ENCODE measurements at regions of chr4 and their contacts with region 1.

Region 1: DNA sequence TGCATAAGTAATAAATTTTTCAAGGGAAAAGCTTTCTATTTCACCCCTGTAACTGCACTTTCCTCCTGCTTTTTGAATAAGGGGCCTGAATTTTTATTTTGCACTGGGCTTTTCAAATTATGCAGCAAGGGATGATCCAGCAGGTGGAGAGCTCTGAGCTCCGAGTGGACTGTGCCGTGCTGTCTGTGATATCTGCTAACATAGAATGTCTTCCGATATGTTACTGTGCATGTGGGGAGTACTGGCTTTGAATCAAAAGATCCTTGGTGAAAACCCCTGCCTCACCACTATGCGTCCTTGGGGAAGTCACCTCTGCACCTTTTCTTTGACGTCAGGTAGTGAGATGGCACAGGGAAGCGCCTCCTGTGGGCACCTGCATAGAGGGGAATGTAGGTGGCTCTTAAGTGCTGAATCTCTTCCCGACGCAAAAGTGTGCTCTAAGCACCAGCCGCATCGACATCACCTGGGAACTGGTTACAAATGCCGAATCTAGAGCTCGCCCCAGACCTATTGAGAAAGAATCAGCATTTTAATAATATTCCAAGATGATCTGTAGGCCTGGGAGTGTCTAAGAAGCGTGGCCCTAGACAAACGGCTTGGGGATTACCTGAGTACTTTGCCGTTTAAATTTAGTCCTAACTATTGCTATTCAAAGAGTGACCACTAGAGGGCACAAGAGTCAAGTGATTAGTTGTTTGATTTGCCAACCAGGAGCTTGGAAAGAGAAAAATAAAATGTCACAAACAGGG is 19.2 kb upstream of the WFS1 start:
- DNase-seq: peak in 1 of 2 experiments; percentile 69
- H3K4me3 ChIP-seq: no peak overlapping the region
- H3K4me3 Mint-ChIP-seq: no peak overlapping the region
- H3K27ac Mint-ChIP-seq: no peak overlapping the region
- H3K4me1 ChIP-seq: no peaks in the 10 kb centered on the region
- H3K4me1 Mint-ChIP-seq: no peaks in the 10 kb centered on the region
- H3K27me3 ChIP-seq: no peaks in the 10 kb centered on the region
- H3K27me3 Mint-ChIP-seq: peaks cover 7% of the 10 kb centered on the region
- CTCF ChIP-seq: peak; percentile 55 to 64

Region 2: DNA sequence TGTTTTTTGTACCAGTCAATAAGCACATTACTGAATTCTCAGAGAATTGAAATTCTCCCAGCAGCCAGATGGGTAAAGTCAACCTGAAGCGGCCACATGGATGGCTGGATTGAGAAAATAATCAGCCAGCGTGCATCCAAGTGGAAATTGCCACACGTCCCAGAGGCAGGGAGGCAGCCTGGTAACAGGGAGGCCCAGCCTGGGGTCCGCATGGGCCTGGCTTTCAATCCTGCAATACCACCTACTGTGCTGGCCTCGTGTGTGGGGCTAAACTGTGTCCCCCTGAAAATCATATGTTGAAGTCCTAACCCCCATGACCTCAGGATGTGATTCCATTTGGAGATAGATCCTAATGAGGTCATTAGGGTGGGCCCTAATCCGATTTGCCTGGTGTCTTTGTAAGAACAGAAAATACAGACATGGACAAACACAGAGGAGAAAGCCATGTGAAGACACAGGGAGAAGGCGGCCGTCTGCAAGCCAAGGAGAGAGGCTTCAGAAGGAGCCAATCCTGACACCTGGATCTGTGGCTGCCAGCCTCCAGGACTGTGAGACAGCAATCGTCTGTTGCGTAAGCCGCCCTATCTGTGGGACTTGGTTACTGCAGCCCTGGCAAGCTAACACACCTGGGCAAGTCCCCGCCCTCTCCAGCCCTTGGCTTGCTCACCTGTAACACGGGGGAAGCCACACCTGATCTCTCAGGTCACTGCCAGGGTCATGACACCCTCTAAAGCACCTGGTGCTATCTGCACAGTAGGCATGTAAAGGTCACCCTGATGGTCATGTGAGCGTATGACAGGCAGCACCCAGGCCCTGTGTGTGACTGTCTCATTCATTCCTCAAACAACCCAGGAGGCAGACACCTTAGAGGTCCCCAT is 140.3 kb before region 1 on chr4:
- CTCF ChIA-PET with region 1: no interaction called
- POLR2A ChIA-PET with region 1: no interaction called
- intact Hi-C with region 1: no loop called
- DNase-seq: peak; percentile 53 to 68
- H3K4me3 ChIP-seq: no peak overlapping the region
- H3K4me3 Mint-ChIP-seq: no peak overlapping the region
- H3K27ac Mint-ChIP-seq: no peak overlapping the region
- H3K4me1 ChIP-seq: no peaks in the 10 kb centered on the region
- H3K4me1 Mint-ChIP-seq: no peaks in the 10 kb centered on the region
- H3K27me3 ChIP-seq: no peaks in the 10 kb centered on the region
- H3K27me3 Mint-ChIP-seq: peaks cover 13% of the 10 kb centered on the region
- CTCF ChIP-seq: peak; percentile 45 to 57

Region 3: GRCh38 chr4:6264225-6264540 is 13.8 kb after region 1 on chr4:
- CTCF ChIA-PET with region 1: interaction called, 12 read pairs
- POLR2A ChIA-PET with region 1: no interaction called
- intact Hi-C with region 1: no loop called
- DNase-seq: peak; percentile 59
- H3K4me3 ChIP-seq: no peak overlapping the region
- H3K4me3 Mint-ChIP-seq: no peak overlapping the region
- H3K27ac Mint-ChIP-seq: no peak overlapping the region
- H3K4me1 ChIP-seq: 0 out of 2 replicates have a peak, but pooled peaks cover 6% of the 10 kb centered on the region
- H3K4me1 Mint-ChIP-seq: no peaks in the 10 kb centered on the region
- H3K27me3 ChIP-seq: no peaks in the 10 kb centered on the region
- H3K27me3 Mint-ChIP-seq: peaks cover 8% of the 10 kb centered on the region
- CTCF ChIP-seq: peak; percentile 28 to 73

Region 4: GRCh38 chr4:6546681-6547447 is 296.5 kb after region 1 on chr4:
- CTCF ChIA-PET with region 1: interaction called, 3 read pairs
- POLR2A ChIA-PET with region 1: no interaction called
- intact Hi-C with region 1: loop called (anchors 1 kb)
- DNase-seq: peak in 1 of 2 experiments; percentile 52
- H3K4me3 ChIP-seq: no peak overlapping the region
- H3K4me3 Mint-ChIP-seq: no peak overlapping the region
- H3K27ac Mint-ChIP-seq: no peak overlapping the region
- H3K4me1 ChIP-seq: no peaks in the 10 kb centered on the region
- H3K4me1 Mint-ChIP-seq: no peaks in the 10 kb centered on the region
- H3K27me3 ChIP-seq: no peaks in the 10 kb centered on the region
- H3K27me3 Mint-ChIP-seq: peaks cover 22% of the 10 kb centered on the region
- CTCF ChIP-seq: peak; percentile 86 to 94

Measured in Caco-2 (cell line).